Left colon (tissue), 2 donors: ENCODE measurements at regions of chr6 and their contacts with region 1.

Region 1: GRCh38 chr6:166989427-166990032 is 9.7 kb upstream of the CEP43 start:
- DNase-seq: peak in 1 of 2 donors; percentile 53
- ATAC-seq: peak; percentile 90

Region 2: DNA sequence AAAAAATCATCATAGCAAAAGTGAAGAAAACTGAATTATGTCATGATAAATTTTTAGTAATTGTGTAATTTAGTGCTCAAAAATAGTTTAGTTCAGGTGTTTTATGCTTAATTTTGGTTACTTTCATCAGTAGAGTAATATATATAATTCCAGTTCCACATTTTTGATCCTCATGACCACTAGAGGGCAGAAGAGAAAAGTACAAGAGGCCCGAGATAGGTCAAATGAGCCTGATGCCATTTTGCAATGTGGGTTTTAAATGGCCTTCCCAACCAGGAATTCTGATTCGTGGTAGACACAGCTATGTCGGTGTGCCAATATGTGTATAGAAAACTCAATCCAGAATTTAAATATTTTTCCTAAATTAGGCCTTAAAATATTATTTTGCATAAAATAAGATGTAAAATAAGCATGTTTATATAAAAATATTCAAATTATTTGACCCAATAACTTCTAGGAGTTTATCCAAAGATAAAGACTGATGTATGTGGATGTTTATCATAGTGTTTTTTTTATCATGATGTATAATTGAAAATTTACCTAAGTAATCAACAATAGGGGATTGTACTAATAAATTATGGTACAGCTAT is 202.7 kb before region 1 on chr6:
- intact Hi-C with region 1: loop called in 1 of 2 experiments (anchors 2 kb)
- DNase-seq: no peak
- ATAC-seq: peak; percentile 71